ENCODE measurements at regions of chr1 and their contacts with region 1.

Region 1: DNA sequence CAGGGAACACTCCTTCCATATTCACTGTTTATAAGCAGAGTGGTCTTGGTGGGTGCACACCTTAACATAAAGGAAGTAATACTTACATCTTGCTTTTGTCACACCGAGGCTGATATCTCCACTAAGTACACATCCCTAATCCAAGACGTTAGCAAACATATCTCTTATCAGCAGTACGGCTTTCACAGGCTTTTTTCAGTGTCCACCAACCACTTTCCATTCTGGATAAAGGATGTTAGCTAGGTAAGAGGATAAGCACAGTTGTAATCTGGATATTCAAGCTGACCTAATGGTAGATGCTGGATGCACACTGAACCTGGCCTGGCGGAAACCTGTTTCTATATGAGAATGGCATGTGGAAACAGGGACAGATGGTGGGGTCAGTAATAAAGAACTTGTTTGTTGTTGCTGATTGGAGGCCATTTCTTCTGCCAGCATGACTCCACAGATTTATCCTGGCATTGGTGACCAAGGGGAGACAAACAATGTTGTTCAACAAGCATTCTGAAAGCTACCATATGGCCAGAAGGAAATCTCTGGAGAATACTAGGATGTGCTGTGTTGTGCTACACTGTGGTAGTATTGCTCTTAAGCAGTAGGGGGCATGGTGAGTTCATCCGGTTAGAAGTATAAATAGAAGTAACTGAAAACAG is 416.4 kb downstream of the PTBP2 start:
- DNase-seq: peak; percentile 32
- CTCF ChIP-seq: peak; percentile 64

Region 2: GRCh38 chr1:97123717-97124431 is 14.1 kb before region 1 on chr1:
- CTCF ChIA-PET with region 1: interaction called, 12 read pairs
- POLR2A ChIA-PET with region 1: no interaction called
- DNase-seq: no peak
- CTCF ChIP-seq: no peak

Region 3: GRCh38 chr1:97151651-97152050 is 13.7 kb after region 1 on chr1:
- CTCF ChIA-PET with region 1: interaction called, 57 read pairs
- POLR2A ChIA-PET with region 1: no interaction called
- DNase-seq: no peak
- CTCF ChIP-seq: no peak